ENCODE measurements at regions of chr1 and their contacts with region 1.

Region 1: DNA sequence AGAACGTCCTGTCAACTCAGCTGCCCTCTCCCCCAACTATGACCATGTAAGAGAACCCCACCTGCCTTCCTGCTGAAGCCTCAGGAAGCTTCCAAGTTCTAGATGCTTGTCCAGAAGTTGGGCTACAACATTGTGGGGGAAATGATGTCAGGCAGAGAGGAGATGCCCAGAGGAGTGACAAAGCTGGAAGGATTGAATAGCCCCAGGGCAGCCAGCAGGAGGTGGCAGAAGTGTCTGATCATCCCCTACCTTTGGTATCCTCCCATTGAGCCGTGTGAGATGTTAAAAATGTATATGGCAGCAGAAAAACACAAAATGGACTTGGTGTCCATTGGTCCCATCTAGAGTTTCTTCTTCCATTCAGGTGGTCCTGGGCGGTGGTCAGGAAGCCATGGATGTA is 6.6 kb downstream of the EIF3I start:
- DNase-seq: no peak
- ATAC-seq: no peak
- H3K4me3 ChIP-seq: no peak overlapping the region
- H3K4me3 Mint-ChIP-seq: no peak overlapping the region
- H3K27ac ChIP-seq: no peak overlapping the region
- H3K27ac Mint-ChIP-seq: no peak overlapping the region
- H3K4me1 ChIP-seq: peaks cover 4 to 6% of the 10 kb centered on the region in 2 experiments
- H3K4me1 Mint-ChIP-seq: peaks cover 6 to 18% (median 18%) of the 10 kb centered on the region in 3 donors
- H3K27me3 ChIP-seq: no peaks in the 10 kb centered on the region
- H3K27me3 Mint-ChIP-seq: no peaks in the 10 kb centered on the region

Region 2: DNA sequence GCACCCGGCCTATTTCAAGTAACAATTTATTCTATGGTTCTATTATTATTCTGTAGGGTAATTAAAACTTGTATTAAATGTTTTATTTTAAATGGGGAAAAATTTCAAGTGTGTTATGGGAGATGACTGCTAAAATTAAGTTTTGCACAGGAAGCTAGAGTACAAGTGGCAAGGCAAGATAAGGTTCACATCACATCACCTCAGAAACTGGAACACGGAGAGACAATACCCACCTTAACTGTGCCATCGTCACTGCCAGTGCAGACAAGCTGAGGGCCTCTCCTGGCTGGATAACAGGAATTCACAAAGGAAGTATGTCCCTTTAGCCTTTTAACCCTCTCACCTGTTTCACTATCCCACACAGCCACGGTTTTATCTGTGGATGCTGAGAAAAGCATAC is 939.8 kb before region 1 on chr1:
- CTCF ChIA-PET with region 1: no interaction called
- POLR2A ChIA-PET with region 1: no interaction called
- DNase-seq: no peak
- ATAC-seq: no peak
- H3K4me3 ChIP-seq: no peak overlapping the region
- H3K4me3 Mint-ChIP-seq: no peak overlapping the region
- H3K27ac ChIP-seq: no peak overlapping the region
- H3K27ac Mint-ChIP-seq: no peak overlapping the region
- H3K4me1 ChIP-seq: no peaks in the 10 kb centered on the region
- H3K4me1 Mint-ChIP-seq: peaks cover 6 to 19% (median 12%) of the 10 kb centered on the region in 3 donors
- H3K27me3 ChIP-seq: no peaks in the 10 kb centered on the region
- H3K27me3 Mint-ChIP-seq: no peaks in the 10 kb centered on the region

Region 3: GRCh38 chr1:32179443-32180185 is 49.2 kb before region 1 on chr1 and contains the start of gene TXLNA:
- CTCF ChIA-PET with region 1: no interaction called
- POLR2A ChIA-PET with region 1: no interaction called
- DNase-seq: peak; percentile 56 to 91 (median 78)
- ATAC-seq: peak; percentile 89 to 92 (median 90)
- H3K4me3 ChIP-seq: peak within 1 kb of the TSS; percentile 86 to 91
- H3K4me3 Mint-ChIP-seq: peak within 1 kb of the TSS; percentile 87 to 93 (median 90)
- H3K27ac ChIP-seq: peak within 1 kb of the TSS; percentile 65
- H3K27ac Mint-ChIP-seq: peak within 1 kb of the TSS; percentile 94 to 95
- H3K4me1 ChIP-seq: peaks cover 7 to 37% of the 10 kb centered on the region in 2 experiments
- H3K4me1 Mint-ChIP-seq: peaks cover 39 to 44% (median 41%) of the 10 kb centered on the region in 3 donors
- H3K27me3 ChIP-seq: no peaks in the 10 kb centered on the region
- H3K27me3 Mint-ChIP-seq: no peaks in the 10 kb centered on the region
- total RNA-seq, gene TXLNA: 25.3 to 47.7 (median 43.8) TPM

Region 4: DNA sequence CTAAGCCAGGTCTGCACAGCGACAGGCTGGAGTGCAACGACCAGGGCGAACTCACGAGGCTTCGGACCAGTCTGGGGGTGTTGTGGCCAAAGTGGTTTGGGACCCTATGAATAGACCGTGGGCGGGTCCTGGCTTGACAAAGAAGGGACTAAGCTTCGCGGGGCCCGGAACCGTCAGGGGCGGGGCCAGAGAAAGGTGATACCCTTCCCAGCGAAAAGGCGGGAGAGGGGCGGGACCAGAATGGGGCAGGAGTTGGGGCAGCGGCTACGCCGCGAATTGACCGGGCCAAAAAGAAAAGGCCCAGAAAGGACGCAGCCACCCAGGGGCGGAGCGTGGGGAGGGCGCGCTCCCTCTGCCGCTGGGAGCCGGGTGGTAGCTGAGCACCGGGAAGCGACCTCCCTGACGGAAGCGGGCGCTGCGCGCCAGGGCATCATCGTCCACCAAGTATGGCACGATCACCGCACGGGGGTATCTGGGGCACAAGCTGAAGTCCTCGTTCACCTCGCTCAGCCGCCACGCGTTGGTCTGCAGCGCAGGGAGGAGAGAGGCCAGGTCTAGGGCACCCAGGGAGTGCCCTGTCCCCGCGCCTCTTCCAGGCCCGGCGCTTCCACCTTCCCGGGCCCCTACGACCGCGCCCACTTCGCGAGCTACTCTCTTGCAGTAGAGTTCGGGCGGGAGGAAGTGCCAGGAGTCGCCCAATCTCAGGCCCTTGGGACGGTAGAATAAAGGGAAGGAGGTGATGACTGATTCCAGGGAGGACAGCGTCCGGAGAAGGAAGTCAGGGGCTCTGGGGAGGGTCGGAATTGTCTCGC is 11.6 kb after region 1 on chr1:
- CTCF ChIA-PET with region 1: no interaction called
- POLR2A ChIA-PET with region 1: interaction called in 1 of 2 experiments, 12 read pairs
- DNase-seq: peak; percentile 30 to 78 (median 58)
- ATAC-seq: peak; percentile 75 to 86 (median 78)
- H3K4me3 ChIP-seq: peak overlapping the region; percentile 75 to 89
- H3K4me3 Mint-ChIP-seq: peak overlapping the region; percentile 84 to 89 (median 87)
- H3K27ac ChIP-seq: peak overlapping the region; percentile 42
- H3K27ac Mint-ChIP-seq: peak overlapping the region; percentile 71 to 86
- H3K4me1 ChIP-seq: peaks cover 5 to 30% of the 10 kb centered on the region in 2 experiments
- H3K4me1 Mint-ChIP-seq: peaks cover 13 to 17% (median 16%) of the 10 kb centered on the region in 3 donors
- H3K27me3 ChIP-seq: no peaks in the 10 kb centered on the region
- H3K27me3 Mint-ChIP-seq: no peaks in the 10 kb centered on the region

Region 5: GRCh38 chr1:33244143-33244820 is 1015.5 kb after region 1 on chr1:
- CTCF ChIA-PET with region 1: no interaction called
- POLR2A ChIA-PET with region 1: no interaction called
- DNase-seq: no peak
- ATAC-seq: no peak
- H3K4me3 ChIP-seq: no peak overlapping the region
- H3K4me3 Mint-ChIP-seq: no peak overlapping the region
- H3K27ac ChIP-seq: no peak overlapping the region
- H3K27ac Mint-ChIP-seq: no peak overlapping the region
- H3K4me1 ChIP-seq: no peaks in the 10 kb centered on the region
- H3K4me1 Mint-ChIP-seq: no peaks in the 10 kb centered on the region
- H3K27me3 ChIP-seq: peaks cover 0 to 16% of the 10 kb centered on the region in 2 experiments
- H3K27me3 Mint-ChIP-seq: peaks cover 12 to 13% of the 10 kb centered on the region in 2 donors